Activated CD4-positive, alpha-beta memory T cell treated with anti-CD3 and anti-CD28 coated beads, Interleukin-2, amount 10 ng/mL, durations not matched to agents 7 days and 5 days (primary cell): ENCODE measurements at regions of chr16 and their contacts with region 1.

Region 1: GRCh38 chr16:10964039-10964890 is 19.9 kb downstream of the CLEC16A start:
- DNase-seq: peak; percentile 87
- H3K4me3 Mint-ChIP-seq: peak overlapping the region; percentile 57
- H3K27ac Mint-ChIP-seq: peak overlapping the region; percentile 95
- H3K4me1 Mint-ChIP-seq: peaks cover 82% of the 10 kb centered on the region
- H3K27me3 Mint-ChIP-seq: no peaks in the 10 kb centered on the region

Region 2: DNA sequence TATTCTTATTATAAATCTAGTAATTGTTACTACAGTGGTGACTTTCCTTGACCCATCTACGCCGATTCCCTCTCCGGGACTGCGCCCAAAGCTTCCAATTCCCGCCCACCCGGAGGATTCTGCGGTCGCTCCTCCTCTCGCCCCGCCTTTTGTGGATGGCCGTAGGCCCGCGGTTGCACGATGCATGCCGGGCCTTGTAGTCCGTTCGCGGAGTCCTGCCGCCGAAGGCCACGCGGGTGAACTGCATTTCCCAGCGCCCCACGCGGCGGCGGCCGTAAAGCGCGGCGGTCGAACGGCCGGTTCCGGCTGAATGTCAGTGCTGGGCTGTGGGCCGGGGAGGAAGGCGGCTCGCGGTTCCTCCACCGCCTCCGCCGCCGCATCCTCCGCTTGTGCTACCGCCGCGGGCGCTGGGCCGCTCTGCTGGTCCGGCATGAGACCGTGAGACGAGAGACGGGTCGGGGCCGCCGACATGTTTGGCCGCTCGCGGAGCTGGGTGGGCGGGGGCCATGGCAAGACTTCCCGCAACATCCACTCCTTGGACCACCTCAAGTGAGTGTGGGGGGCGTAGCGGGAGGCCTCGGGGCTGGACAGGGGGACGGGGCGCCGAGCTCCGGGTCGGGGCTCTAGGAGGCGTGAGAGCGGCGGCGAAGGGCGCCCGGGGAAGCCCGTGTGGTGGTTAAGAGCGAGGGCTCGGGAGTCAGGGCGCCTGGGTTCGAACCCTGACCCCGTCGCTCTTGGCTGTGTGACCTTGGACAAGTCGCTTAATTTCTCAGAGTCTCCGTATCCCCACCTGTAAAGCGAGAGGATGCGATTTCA is 19.8 kb before region 1 on chr16 and contains the start of gene CLEC16A:
- CTCF ChIA-PET with region 1: interaction called, 13 read pairs
- POLR2A ChIA-PET with region 1: interaction called, 11 read pairs
- DNase-seq: peak; percentile 97
- H3K4me3 Mint-ChIP-seq: peak within 1 kb of the TSS; percentile 78
- H3K27ac Mint-ChIP-seq: peak within 1 kb of the TSS; percentile 26
- H3K4me1 Mint-ChIP-seq: peaks cover 72% of the 10 kb centered on the region
- H3K27me3 Mint-ChIP-seq: no peaks in the 10 kb centered on the region
- total RNA-seq, gene CLEC16A: 30.3 to 32.4 TPM

Region 3: DNA sequence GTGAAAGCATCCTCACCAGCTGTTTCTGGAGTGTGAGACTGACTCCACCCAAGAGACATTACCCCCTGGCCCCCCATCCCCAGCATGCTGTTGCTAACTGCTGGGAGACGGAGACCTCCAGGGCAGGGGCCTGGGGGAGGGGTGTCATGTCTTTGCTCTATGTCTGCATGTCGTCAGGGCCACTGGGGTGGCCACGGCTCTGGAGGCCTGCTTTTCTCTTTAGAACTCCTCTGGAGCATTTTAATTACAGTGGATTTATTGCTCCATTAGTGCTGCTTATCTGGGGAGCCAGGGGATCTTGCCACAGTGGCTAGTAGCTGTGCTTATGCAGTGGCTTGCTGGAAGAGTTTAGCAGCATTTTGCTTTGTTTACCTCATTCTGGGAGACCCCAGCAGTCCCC is 12.4 kb after region 1 on chr16:
- CTCF ChIA-PET with region 1: interaction called, 16 read pairs
- POLR2A ChIA-PET with region 1: interaction called, 11 read pairs
- DNase-seq: no peak
- H3K4me3 Mint-ChIP-seq: no peak overlapping the region
- H3K27ac Mint-ChIP-seq: no peak overlapping the region
- H3K4me1 Mint-ChIP-seq: peaks cover 86% of the 10 kb centered on the region
- H3K27me3 Mint-ChIP-seq: no peaks in the 10 kb centered on the region

Region 4: DNA sequence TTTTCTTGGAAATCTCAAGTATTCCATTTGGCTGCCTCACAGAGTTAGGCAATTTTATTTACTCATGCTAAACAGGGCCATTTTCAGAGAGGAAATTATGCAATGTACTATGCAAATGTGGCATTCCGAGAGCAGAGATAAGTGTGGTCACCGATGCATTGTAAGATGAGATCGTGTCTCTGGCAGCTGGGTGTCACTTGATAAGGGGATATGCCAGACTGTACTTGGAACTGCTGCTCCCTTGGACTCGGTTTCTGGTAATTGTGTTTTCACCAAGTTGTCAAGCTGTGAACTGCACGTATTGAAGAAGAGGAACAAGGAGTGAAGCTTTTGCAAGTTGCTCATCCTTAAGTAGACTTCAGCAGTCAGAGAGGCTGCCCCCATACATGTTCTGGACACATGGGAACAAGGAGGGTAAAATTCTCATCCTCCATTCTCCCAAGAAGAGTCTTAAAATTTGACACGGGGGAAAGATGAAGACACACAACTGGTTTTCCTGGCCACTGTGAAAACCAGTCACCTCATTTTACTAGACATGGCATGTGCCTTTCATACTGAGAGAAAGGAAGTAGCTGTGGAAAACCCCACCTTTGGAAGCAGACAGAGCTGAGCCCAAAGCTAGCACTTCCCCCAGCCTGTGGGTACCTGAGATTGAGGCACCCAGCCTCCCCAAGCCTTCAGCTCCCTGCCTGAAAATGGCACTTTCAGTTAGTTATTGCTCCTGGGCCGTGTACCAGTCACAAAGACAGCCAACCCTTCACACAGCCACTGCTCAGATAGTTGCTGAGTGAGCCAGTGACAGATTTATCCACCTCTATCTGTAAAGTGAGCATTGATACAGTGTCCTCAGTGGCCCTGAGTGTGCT is 141.0 kb after region 1 on chr16:
- CTCF ChIA-PET with region 1: interaction called, 20 read pairs
- POLR2A ChIA-PET with region 1: interaction called, 4 read pairs
- DNase-seq: peak; percentile 67
- H3K4me3 Mint-ChIP-seq: peak overlapping the region; percentile 19
- H3K27ac Mint-ChIP-seq: peak overlapping the region; percentile 90
- H3K4me1 Mint-ChIP-seq: peaks cover 83% of the 10 kb centered on the region
- H3K27me3 Mint-ChIP-seq: no peaks in the 10 kb centered on the region

Region 5: GRCh38 chr16:11407047-11407982 is 443.1 kb after region 1 on chr16:
- CTCF ChIA-PET with region 1: interaction called, 50 read pairs
- POLR2A ChIA-PET with region 1: no interaction called
- DNase-seq: peak; percentile 73
- H3K4me3 Mint-ChIP-seq: no peak overlapping the region
- H3K27ac Mint-ChIP-seq: no peak overlapping the region
- H3K4me1 Mint-ChIP-seq: peaks cover 2% of the 10 kb centered on the region
- H3K27me3 Mint-ChIP-seq: no peaks in the 10 kb centered on the region

Region 6: DNA sequence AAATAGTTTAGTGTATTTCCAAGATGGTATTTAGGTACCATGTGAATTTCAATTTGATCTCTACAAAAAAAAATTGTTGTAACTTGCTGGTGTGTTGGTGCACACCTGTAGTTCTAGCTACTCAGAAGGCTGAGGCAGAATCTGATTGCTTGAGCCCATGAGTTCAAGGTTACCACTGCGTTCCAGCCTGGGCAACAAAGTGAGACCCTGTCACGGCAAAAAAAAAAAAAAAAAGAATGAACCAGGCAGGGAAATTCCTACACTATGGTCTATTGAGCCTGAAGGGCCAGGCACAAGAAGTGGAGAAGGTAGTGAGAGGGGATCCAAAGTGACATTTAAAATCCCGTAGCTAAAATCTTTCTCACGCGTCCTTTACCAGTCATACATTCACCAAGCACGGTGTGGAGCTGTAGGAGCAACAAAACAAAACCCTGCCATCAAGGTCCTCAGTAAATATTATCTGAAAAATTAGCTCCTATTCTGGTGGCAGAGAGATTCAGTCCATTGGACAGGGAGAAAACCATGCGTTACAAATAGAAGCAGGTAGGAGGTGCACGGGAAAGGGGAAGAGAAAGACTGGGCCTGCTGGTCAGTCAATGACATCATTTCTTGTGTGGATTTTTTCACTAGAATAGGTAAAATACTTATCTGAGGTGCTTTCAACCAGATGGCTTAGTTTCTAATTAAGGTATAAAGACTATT is 751.1 kb after region 1 on chr16:
- CTCF ChIA-PET with region 1: interaction called, 18 read pairs
- POLR2A ChIA-PET with region 1: no interaction called
- DNase-seq: no peak
- H3K4me3 Mint-ChIP-seq: no peak overlapping the region
- H3K27ac Mint-ChIP-seq: no peak overlapping the region
- H3K4me1 Mint-ChIP-seq: peaks cover 7% of the 10 kb centered on the region
- H3K27me3 Mint-ChIP-seq: no peaks in the 10 kb centered on the region